GM10248 (cell line): ENCODE measurements at regions of chr11 and their contacts with region 1.

Region 1: GRCh38 chr11:65888163-65888814 is at the start of gene FIBP:
- DNase-seq: peak; percentile 97
- CTCF ChIP-seq: peak; percentile 73

Region 2: GRCh38 chr11:65711785-65712632 is 176.3 kb before region 1 on chr11 and contains the start of gene KAT5:
- CTCF ChIA-PET with region 1: interaction called, 16 read pairs
- POLR2A ChIA-PET with region 1: interaction called, 7 read pairs
- DNase-seq: peak; percentile 92
- CTCF ChIP-seq: peak; percentile 96

Region 3: DNA sequence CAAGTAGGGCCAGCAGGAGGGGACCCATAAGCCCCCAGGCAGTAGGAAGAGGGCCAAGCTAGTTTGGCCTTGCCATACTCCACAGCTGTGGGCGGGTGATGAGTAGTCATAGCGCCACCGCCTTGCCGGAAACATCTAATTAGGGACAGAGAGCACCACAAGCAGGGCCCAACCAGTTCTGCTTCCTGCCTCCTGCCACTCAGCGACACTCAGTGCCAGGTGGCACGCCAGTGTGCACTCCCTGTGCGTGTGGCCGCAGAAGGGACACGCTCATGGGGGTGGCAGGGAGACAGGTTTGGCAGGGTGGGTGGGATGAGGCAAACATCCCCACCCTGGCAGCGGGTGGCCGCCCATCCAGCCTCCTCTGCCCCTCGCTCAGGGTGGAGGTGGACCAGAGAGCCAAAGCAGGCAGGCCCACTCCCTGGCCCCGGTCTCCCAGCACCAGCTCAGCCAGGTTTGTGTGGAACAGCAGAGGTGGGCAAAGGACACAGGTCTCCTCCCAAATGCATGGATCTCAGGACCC is 96.5 kb before region 1 on chr11:
- CTCF ChIA-PET with region 1: no interaction called
- POLR2A ChIA-PET with region 1: no interaction called
- DNase-seq: peak; percentile 82
- CTCF ChIP-seq: no peak

Region 4: GRCh38 chr11:65859200-65859811 is 29.0 kb before region 1 on chr11:
- CTCF ChIA-PET with region 1: interaction called, 535 read pairs
- POLR2A ChIA-PET with region 1: interaction called, 25 read pairs
- DNase-seq: peak; percentile 95
- CTCF ChIP-seq: peak; percentile 6

Region 5: DNA sequence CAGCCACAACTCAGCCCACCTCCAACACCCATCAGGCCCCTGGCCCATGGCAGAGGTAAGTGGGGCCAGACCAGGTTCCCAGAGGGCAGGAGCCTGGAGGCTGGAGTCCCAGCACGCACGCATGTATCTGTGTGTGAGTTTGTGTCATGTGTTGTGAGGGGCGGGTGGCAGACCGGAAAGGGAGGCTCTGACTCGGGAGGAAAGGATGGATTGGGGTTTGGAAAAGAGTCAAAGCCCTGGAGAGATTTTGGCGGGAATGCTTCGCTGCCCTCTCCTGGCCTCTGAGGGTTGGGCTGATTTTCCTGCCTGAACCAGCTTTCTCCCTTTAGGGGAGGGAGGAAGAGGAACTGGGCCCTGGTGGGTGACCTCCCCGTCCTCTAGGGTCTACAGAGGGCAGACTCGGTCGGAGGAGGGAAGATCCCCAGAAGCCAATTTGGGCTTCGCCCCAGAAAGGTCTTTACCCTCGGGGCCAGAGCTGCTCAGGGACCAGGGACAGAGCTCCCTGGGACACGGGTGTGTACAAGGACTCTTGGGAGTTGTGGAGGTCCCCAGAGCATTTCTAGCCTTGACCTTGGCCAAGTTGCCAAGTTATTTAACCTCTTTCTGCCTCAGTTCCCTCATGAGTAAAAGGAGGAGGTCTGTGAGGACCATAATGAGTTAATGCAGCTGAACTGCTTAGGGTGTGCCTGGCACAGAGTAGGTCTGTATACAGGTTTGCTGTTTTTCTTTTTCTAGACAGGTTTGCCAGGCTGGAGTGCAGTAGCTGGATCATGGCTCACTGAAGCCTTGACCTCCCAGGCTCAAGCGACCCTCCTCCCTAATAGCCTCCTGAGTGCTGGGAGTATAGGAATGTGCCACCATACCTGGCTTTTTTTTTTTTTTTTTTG is 23.6 kb after region 1 on chr11:
- CTCF ChIA-PET with region 1: interaction called, 80 read pairs
- POLR2A ChIA-PET with region 1: interaction called, 4 read pairs
- DNase-seq: no peak
- CTCF ChIP-seq: no peak

Region 6: GRCh38 chr11:65961232-65961901 is 73.1 kb after region 1 on chr11 and contains the start of gene SART1:
- CTCF ChIA-PET with region 1: interaction called, 13 read pairs
- POLR2A ChIA-PET with region 1: no interaction called
- DNase-seq: peak; percentile 100
- CTCF ChIP-seq: no peak

Region 7: DNA sequence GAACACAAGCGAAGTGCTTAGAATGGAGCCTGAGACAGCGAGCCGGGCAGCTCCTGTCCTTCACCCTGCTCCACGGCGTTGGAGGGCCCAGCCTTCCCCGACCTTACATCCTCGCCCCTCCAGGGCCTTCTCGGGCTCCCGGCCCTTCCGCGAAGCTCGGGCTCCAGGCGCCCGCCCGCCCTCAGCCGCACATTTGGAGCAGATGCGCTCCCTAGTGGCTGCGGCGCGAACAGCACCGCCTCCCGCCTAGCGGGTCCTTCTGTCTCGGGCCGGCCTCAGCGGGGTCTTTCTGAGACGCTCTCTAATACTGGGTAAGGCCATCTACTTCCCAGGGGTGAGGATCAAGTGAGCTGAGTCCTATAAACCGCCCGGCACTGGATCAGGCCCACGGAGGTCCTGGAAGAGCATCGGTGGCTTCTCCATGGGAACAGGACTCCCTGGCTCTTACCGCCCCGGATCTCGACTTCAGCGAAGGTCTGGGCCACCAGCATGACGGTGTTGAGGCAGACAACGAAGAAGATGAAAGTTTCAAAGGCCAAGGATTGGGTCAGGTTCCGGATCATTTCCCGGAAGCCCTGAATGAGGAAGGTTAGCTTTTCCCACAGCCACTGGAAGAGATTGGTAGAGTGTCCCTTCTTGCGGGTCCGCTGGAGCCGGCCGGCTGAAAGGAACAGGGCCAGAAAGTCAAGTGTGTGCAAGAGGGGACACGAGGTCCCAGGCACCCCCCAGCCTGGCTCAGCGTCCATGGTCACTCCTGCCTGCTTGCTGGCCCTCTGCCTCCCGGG is 134.3 kb after region 1 on chr11:
- CTCF ChIA-PET with region 1: interaction called, 12 read pairs
- POLR2A ChIA-PET with region 1: no interaction called
- DNase-seq: peak; percentile 92
- CTCF ChIP-seq: peak; percentile 97